ENCODE measurements at regions of chr1 and their contacts with region 1.

Region 1: GRCh38 chr1:212791676-212792395 is at the starts of genes NSL1 and TATDN3:
- DNase-seq: peak; percentile 91 to 94
- ATAC-seq: peak; percentile 93 to 98 (median 96)
- H3K4me3 ChIP-seq: peak within 1 kb of the TSS; percentile 72 to 99 (median 85)
- H3K27ac ChIP-seq: peak within 1 kb of the TSS; percentile 71 to 99 (median 95)
- H3K4me1 ChIP-seq: peaks cover 0 to 61% (median 30%) of the 10 kb centered on the region in 9 donors
- H3K27me3 ChIP-seq: no peaks in the 10 kb centered on the region
- CTCF ChIP-seq: peak in 1 of 9 donors; percentile 15
- total RNA-seq, gene NSL1: 19.1 to 30.1 (median 24.3) TPM
- total RNA-seq, gene TATDN3: 20.7 to 38.8 (median 26.5) TPM

Region 2: DNA sequence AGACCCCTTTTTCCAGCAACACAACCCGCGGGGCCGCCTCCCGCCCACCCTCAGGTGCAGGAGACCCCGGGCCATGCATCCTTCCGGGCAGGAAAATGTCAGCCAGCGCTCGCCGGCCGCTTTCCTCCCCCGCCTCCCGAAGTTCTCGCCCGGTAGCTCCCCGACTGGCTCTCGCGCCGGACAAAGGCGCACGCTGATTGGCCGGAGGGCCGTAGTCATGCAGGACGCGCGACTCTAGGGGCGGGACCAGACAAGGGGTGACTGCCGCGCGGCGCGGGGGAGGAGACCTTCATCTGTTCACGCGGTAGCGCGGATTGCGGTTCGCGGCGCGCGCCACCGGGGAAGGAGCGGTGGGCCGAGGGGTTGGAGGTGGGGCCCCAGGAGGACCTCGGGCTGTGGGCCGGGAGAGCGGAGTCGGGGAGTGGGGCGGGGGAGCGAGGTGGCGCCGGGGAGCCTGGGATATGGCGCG is 66.2 kb after region 1 on chr1 and contains the start of gene FLVCR1:
- intact Hi-C with region 1: loop called in 1 of 10 experiments (anchors 5 kb)
- DNase-seq: peak; percentile 97
- ATAC-seq: peak; percentile 100
- H3K4me3 ChIP-seq: peak within 1 kb of the TSS; percentile 67 to 99 (median 84)
- H3K27ac ChIP-seq: peak within 1 kb of the TSS in 9 of 10 donors; percentile 62 to 94 (median 86)
- H3K4me1 ChIP-seq: peaks cover 3 to 51% (median 29%) of the 10 kb centered on the region in 9 donors
- H3K27me3 ChIP-seq: no peaks in the 10 kb centered on the region
- CTCF ChIP-seq: no peak
- total RNA-seq, gene FLVCR1: 1.2 to 4.9 (median 2.2) TPM

Region 3: DNA sequence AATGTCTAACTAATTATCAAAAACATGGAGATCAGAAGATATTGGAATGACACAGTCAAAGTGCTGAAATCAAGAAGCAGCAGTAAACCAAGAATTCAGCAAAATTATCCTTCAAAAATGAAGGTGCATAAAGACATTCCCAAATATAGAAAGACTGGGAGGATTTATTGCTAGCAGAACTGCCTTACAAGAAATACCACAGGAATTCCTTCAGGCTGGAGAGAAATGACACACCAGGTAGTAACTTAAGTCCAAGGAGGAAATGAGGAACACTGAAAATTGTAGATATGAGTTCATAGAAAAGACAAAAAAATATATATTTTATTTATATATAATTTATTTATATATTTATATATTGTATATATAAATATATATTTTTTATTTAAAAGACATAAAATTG is 476.4 kb after region 1 on chr1:
- intact Hi-C with region 1: no loop called
- DNase-seq: no peak
- ATAC-seq: no peak
- H3K4me3 ChIP-seq: no peak overlapping the region
- H3K27ac ChIP-seq: no peak overlapping the region
- H3K4me1 ChIP-seq: no peaks in the 10 kb centered on the region
- H3K27me3 ChIP-seq: no peaks in the 10 kb centered on the region
- CTCF ChIP-seq: no peak

Measured in heart right ventricle (tissue), 16 donors.